Psoas muscle (tissue), 8 donors: ENCODE measurements at regions of chr11 and their contacts with region 1.

Region 1: GRCh38 chr11:62905927-62906531 is 15.1 kb downstream of the CHRM1 start:
- DNase-seq: peak; percentile 75 to 87
- ATAC-seq: peak; percentile 83 to 94 (median 89)
- H3K4me3 ChIP-seq: no peak overlapping the region
- H3K27ac ChIP-seq: no peak overlapping the region
- H3K4me1 ChIP-seq: peaks cover 5% of the 10 kb centered on the region
- H3K27me3 ChIP-seq: no peaks in the 10 kb centered on the region
- CTCF ChIP-seq: peak; percentile 98

Region 2: DNA sequence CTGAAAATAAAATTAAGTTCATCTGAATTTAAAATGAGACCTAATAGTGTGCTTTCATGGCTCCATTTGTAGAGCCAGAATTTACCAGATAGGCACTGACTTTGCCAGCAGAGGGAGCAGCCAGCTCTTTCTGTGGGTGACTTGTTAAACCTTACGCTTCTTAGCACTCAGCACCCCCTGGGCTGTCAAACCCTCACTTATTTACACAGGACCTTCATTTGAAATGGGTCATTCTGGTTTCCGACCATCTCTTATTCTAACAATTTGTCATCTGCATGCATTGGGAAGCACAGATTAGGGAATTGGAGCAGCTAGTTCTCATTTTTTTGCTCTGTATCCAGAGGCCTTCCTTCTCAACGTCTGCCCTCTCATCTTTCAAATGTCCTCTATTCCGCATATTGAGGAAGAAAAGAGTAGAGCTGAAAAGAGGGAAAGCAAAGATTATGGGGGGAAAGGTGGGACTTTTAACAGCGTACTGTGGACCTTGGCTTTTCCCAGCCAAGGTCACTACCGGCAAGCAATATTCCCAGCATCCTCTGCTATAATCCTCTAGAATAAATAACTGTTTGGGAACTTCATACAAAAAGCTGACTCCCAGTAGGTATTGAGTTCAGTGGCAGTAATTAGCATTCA is 565.6 kb before region 1 on chr11:
- intact Hi-C with region 1: no loop called
- DNase-seq: peak; percentile 33 to 55
- ATAC-seq: peak in 1 of 4 donors; percentile 46
- H3K4me3 ChIP-seq: no peak overlapping the region
- H3K27ac ChIP-seq: no peak overlapping the region
- H3K4me1 ChIP-seq: peaks cover 7% of the 10 kb centered on the region
- H3K27me3 ChIP-seq: no peaks in the 10 kb centered on the region
- CTCF ChIP-seq: peak; percentile 54

Region 3: GRCh38 chr11:62726915-62727763 is 178.9 kb before region 1 on chr11 and contains the start of gene HNRNPUL2:
- intact Hi-C with region 1: no loop called
- DNase-seq: peak; percentile 99
- ATAC-seq: peak; percentile 92 to 94 (median 94)
- H3K4me3 ChIP-seq: peak within 1 kb of the TSS; percentile 76
- H3K27ac ChIP-seq: peak within 1 kb of the TSS; percentile 98
- H3K4me1 ChIP-seq: peaks cover 38% of the 10 kb centered on the region
- H3K27me3 ChIP-seq: no peaks in the 10 kb centered on the region
- CTCF ChIP-seq: no peak
- total RNA-seq, gene HNRNPUL2: 27.2 to 39.7 (median 31.4) TPM

Region 4: GRCh38 chr11:62860835-62861563 is 45.0 kb before region 1 on chr11:
- intact Hi-C with region 1: no loop called
- DNase-seq: no peak
- ATAC-seq: no peak
- H3K4me3 ChIP-seq: no peak overlapping the region
- H3K27ac ChIP-seq: no peak overlapping the region
- H3K4me1 ChIP-seq: peaks cover 8% of the 10 kb centered on the region
- H3K27me3 ChIP-seq: no peaks in the 10 kb centered on the region
- CTCF ChIP-seq: no peak

Region 5: GRCh38 chr11:62962391-62962981 is 56.5 kb after region 1 on chr11:
- intact Hi-C with region 1: no loop called
- DNase-seq: no peak
- ATAC-seq: no peak
- H3K4me3 ChIP-seq: no peak overlapping the region
- H3K27ac ChIP-seq: no peak overlapping the region
- H3K4me1 ChIP-seq: peaks cover 13% of the 10 kb centered on the region
- H3K27me3 ChIP-seq: no peaks in the 10 kb centered on the region
- CTCF ChIP-seq: no peak

Region 6: DNA sequence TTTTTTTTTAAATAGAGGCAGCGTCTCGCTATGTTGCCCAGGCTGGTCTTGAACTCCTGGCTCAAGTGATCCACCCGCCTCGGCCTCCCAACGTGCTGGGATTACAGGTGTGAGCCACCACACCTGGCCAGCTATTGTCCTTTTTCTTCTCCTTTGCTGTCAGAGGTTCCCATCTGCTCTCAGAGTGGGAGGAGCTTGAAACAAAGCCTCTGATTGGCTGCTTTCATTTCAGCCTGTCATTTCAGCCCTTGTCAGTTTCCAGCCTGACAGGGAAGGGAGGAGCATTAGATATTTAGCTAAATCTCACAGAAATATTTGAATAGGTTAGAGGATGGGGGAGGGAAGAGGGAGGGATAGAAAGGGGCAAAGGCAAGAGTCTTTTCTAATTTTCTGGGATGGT is 70.1 kb after region 1 on chr11:
- intact Hi-C with region 1: loop called in 1 of 2 experiments (anchors 2 kb)
- DNase-seq: no peak
- ATAC-seq: no peak
- H3K4me3 ChIP-seq: no peak overlapping the region
- H3K27ac ChIP-seq: no peak overlapping the region
- H3K4me1 ChIP-seq: peaks cover 3% of the 10 kb centered on the region
- H3K27me3 ChIP-seq: no peaks in the 10 kb centered on the region
- CTCF ChIP-seq: no peak

Region 7: GRCh38 chr11:63023841-63024648 is 118.0 kb after region 1 on chr11:
- intact Hi-C with region 1: loop called (anchors 1 kb)
- DNase-seq: peak; percentile 85 to 91
- ATAC-seq: peak; percentile 90 to 97 (median 92)
- H3K4me3 ChIP-seq: no peak overlapping the region
- H3K27ac ChIP-seq: no peak overlapping the region
- H3K4me1 ChIP-seq: no peaks in the 10 kb centered on the region
- H3K27me3 ChIP-seq: peaks cover 0 to 7% (median 3%) of the 10 kb centered on the region in 3 donors
- CTCF ChIP-seq: peak; percentile 100